Caco-2 (cell line): ENCODE measurements at regions of chr3 and their contacts with region 1.

Region 1: GRCh38 chr3:182618085-182618732 is 175.1 kb upstream of the ATP11B start:
- DNase-seq: peak in 1 of 2 experiments; percentile 45
- H3K4me3 ChIP-seq: no peak overlapping the region
- H3K4me3 Mint-ChIP-seq: no peak overlapping the region
- H3K27ac Mint-ChIP-seq: no peak overlapping the region
- H3K4me1 ChIP-seq: 0 out of 2 replicates have a peak, but pooled peaks cover 3% of the 10 kb centered on the region
- H3K4me1 Mint-ChIP-seq: no peaks in the 10 kb centered on the region
- H3K27me3 ChIP-seq: no peaks in the 10 kb centered on the region
- H3K27me3 Mint-ChIP-seq: no peaks in the 10 kb centered on the region
- CTCF ChIP-seq: peak; percentile 75 to 84

Region 2: DNA sequence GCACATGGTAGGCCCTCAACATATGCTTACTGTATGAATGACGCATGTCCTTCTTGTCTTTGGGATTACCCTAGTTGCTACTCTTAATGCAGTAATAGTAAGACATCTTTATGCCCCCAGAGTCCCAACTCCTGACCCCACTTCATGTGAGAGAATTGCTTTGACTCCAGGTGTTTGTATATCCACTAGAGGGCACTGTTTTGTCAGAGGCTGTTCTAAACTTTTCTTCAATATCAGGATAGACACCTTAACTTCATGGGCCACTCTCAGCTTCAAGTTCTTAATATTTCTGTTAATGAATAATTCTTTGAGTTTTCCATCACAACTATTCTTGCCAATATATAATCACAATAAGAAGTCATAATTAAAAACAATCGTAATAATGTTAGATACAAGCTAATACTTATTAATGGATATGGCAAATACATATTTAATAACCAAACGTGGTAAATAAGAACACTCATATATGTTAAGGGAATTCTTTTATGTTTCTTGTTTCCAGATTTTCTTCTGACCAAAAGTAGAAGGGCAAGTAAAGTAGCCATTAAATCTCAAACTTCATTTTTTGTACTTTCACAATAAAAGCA is 1291.5 kb before region 1 on chr3:
- CTCF ChIA-PET with region 1: no interaction called
- POLR2A ChIA-PET with region 1: no interaction called
- intact Hi-C with region 1: loop called (anchors 1 kb)
- DNase-seq: peak in 1 of 2 experiments; percentile 32
- H3K4me3 ChIP-seq: no peak overlapping the region
- H3K4me3 Mint-ChIP-seq: no peak overlapping the region
- H3K27ac Mint-ChIP-seq: no peak overlapping the region
- H3K4me1 ChIP-seq: no peaks in the 10 kb centered on the region
- H3K4me1 Mint-ChIP-seq: no peaks in the 10 kb centered on the region
- H3K27me3 ChIP-seq: no peaks in the 10 kb centered on the region
- H3K27me3 Mint-ChIP-seq: peaks cover 31% of the 10 kb centered on the region
- CTCF ChIP-seq: peak; percentile 29 to 71

Region 3: GRCh38 chr3:181948286-181948685 is 669.9 kb before region 1 on chr3:
- CTCF ChIA-PET with region 1: no interaction called
- POLR2A ChIA-PET with region 1: no interaction called
- intact Hi-C with region 1: loop called (anchors 1 kb)
- DNase-seq: peak in 1 of 2 experiments; percentile 25
- H3K4me3 ChIP-seq: no peak overlapping the region
- H3K4me3 Mint-ChIP-seq: no peak overlapping the region
- H3K27ac Mint-ChIP-seq: no peak overlapping the region
- H3K4me1 ChIP-seq: peaks cover 8% of the 10 kb centered on the region
- H3K4me1 Mint-ChIP-seq: peaks cover 10% of the 10 kb centered on the region
- H3K27me3 ChIP-seq: no peaks in the 10 kb centered on the region
- H3K27me3 Mint-ChIP-seq: no peaks in the 10 kb centered on the region
- CTCF ChIP-seq: peak in 1 of 2 experiments; percentile 34

Region 4: DNA sequence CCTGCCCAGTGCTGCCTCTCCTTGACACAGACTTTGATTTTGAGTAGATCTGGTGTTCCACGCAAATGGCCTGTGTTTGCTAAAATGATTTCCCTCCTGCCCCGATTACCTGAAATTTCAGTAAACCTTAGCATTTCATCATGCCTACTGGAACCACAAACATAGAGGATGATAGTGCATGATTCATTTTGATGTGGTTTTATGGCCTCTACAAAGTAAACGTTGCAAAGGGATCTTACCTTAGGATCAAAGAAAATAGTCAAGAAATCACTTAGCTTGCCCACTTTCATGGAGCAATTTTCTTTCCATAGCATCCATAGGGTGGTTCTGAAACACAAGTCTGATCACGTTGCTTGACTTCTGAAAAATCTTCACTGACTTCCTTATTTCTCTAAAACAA is 349.5 kb before region 1 on chr3:
- CTCF ChIA-PET with region 1: no interaction called
- POLR2A ChIA-PET with region 1: no interaction called
- intact Hi-C with region 1: loop called (anchors 5 kb)
- DNase-seq: no peak
- H3K4me3 ChIP-seq: no peak overlapping the region
- H3K4me3 Mint-ChIP-seq: no peak overlapping the region
- H3K27ac Mint-ChIP-seq: no peak overlapping the region
- H3K4me1 ChIP-seq: no peaks in the 10 kb centered on the region
- H3K4me1 Mint-ChIP-seq: no peaks in the 10 kb centered on the region
- H3K27me3 ChIP-seq: no peaks in the 10 kb centered on the region
- H3K27me3 Mint-ChIP-seq: no peaks in the 10 kb centered on the region
- CTCF ChIP-seq: no peak

Region 5: GRCh38 chr3:182392182-182392937 is 225.8 kb before region 1 on chr3:
- CTCF ChIA-PET with region 1: no interaction called
- POLR2A ChIA-PET with region 1: no interaction called
- intact Hi-C with region 1: loop called (anchors 2 kb)
- DNase-seq: no peak
- H3K4me3 ChIP-seq: no peak overlapping the region
- H3K4me3 Mint-ChIP-seq: no peak overlapping the region
- H3K27ac Mint-ChIP-seq: no peak overlapping the region
- H3K4me1 ChIP-seq: peaks cover 16% of the 10 kb centered on the region
- H3K4me1 Mint-ChIP-seq: peaks cover 24% of the 10 kb centered on the region
- H3K27me3 ChIP-seq: no peaks in the 10 kb centered on the region
- H3K27me3 Mint-ChIP-seq: no peaks in the 10 kb centered on the region
- CTCF ChIP-seq: no peak

Region 6: GRCh38 chr3:182490596-182491491 is 127.4 kb before region 1 on chr3:
- CTCF ChIA-PET with region 1: no interaction called
- POLR2A ChIA-PET with region 1: no interaction called
- intact Hi-C with region 1: loop called (anchors 2 kb)
- DNase-seq: peak in 1 of 2 experiments; percentile 22
- H3K4me3 ChIP-seq: no peak overlapping the region
- H3K4me3 Mint-ChIP-seq: no peak overlapping the region
- H3K27ac Mint-ChIP-seq: no peak overlapping the region
- H3K4me1 ChIP-seq: no peaks in the 10 kb centered on the region
- H3K4me1 Mint-ChIP-seq: no peaks in the 10 kb centered on the region
- H3K27me3 ChIP-seq: no peaks in the 10 kb centered on the region
- H3K27me3 Mint-ChIP-seq: no peaks in the 10 kb centered on the region
- CTCF ChIP-seq: peak; percentile 25 to 39

Region 7: GRCh38 chr3:182683453-182683852 is 65.2 kb after region 1 on chr3:
- CTCF ChIA-PET with region 1: interaction called, 5 read pairs
- POLR2A ChIA-PET with region 1: no interaction called
- intact Hi-C with region 1: loop called (anchors 1 kb)
- DNase-seq: peak; percentile 49 to 74
- H3K4me3 ChIP-seq: no peak overlapping the region
- H3K4me3 Mint-ChIP-seq: peak overlapping the region; percentile 74
- H3K27ac Mint-ChIP-seq: no peak overlapping the region
- H3K4me1 ChIP-seq: peaks cover 12% of the 10 kb centered on the region; the same call in 1 of the 2 replicates
- H3K4me1 Mint-ChIP-seq: peaks cover 27% of the 10 kb centered on the region
- H3K27me3 ChIP-seq: no peaks in the 10 kb centered on the region
- H3K27me3 Mint-ChIP-seq: peaks cover 3% of the 10 kb centered on the region
- CTCF ChIP-seq: peak; percentile 71 to 83